PC-3 (cell line): ENCODE measurements at regions of chr21 and their contacts with region 1.

Region 1: GRCh38 chr21:18801468-18801867 is 397.9 kb upstream of the TMPRSS15 start:
- DNase-seq: peak; percentile 71
- ATAC-seq: peak; percentile 95
- H3K4me3 ChIP-seq: no peak overlapping the region
- H3K27ac ChIP-seq: no peak overlapping the region
- H3K4me1 ChIP-seq: no peaks in the 10 kb centered on the region
- H3K27me3 ChIP-seq: no peaks in the 10 kb centered on the region
- CTCF ChIP-seq: peak; percentile 67

Region 2: GRCh38 chr21:18499761-18500376 is 301.6 kb before region 1 on chr21:
- CTCF ChIA-PET with region 1: no interaction called
- POLR2A ChIA-PET with region 1: no interaction called
- intact Hi-C with region 1: loop called (anchors 5 kb)
- DNase-seq: peak; percentile 69
- ATAC-seq: no peak
- H3K4me3 ChIP-seq: no peak overlapping the region
- H3K27ac ChIP-seq: no peak overlapping the region
- H3K4me1 ChIP-seq: no peaks in the 10 kb centered on the region
- H3K27me3 ChIP-seq: no peaks in the 10 kb centered on the region
- CTCF ChIP-seq: peak; percentile 89

Region 3: GRCh38 chr21:18832950-18833349 is 31.5 kb after region 1 on chr21:
- CTCF ChIA-PET with region 1: no interaction called
- POLR2A ChIA-PET with region 1: no interaction called
- intact Hi-C with region 1: loop called (anchors 2 kb)
- DNase-seq: peak; percentile 85
- ATAC-seq: peak; percentile 98
- H3K4me3 ChIP-seq: no peak overlapping the region
- H3K27ac ChIP-seq: peak overlapping the region; percentile 50
- H3K4me1 ChIP-seq: peaks cover 18% of the 10 kb centered on the region
- H3K27me3 ChIP-seq: no peaks in the 10 kb centered on the region
- CTCF ChIP-seq: no peak

Region 4: DNA sequence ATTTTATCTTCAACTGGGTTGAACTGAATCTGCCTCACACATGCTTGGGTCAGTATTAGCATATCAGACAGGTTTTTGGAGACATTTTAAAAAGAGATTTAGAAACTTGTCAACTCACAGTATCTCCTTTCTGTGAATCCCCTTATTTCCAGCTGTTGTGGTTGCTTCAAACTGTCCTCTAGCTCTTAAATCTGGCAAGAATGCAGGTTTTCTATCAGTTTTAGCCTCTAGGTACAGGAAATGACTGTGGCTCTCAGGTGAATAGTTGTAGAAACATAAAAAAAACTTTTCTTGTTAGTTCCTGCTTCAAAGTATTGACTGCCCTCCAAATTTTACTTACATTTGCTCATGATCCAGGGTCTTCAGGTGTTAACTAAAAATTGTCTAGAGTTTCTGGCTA is 97.8 kb after region 1 on chr21:
- CTCF ChIA-PET with region 1: no interaction called
- POLR2A ChIA-PET with region 1: no interaction called
- intact Hi-C with region 1: loop called (anchors 10 kb)
- DNase-seq: no peak
- ATAC-seq: no peak
- H3K4me3 ChIP-seq: no peak overlapping the region
- H3K27ac ChIP-seq: no peak overlapping the region
- H3K4me1 ChIP-seq: peaks cover 4% of the 10 kb centered on the region; the same call in 1 of the 2 replicates
- H3K27me3 ChIP-seq: no peaks in the 10 kb centered on the region
- CTCF ChIP-seq: no peak

Region 5: DNA sequence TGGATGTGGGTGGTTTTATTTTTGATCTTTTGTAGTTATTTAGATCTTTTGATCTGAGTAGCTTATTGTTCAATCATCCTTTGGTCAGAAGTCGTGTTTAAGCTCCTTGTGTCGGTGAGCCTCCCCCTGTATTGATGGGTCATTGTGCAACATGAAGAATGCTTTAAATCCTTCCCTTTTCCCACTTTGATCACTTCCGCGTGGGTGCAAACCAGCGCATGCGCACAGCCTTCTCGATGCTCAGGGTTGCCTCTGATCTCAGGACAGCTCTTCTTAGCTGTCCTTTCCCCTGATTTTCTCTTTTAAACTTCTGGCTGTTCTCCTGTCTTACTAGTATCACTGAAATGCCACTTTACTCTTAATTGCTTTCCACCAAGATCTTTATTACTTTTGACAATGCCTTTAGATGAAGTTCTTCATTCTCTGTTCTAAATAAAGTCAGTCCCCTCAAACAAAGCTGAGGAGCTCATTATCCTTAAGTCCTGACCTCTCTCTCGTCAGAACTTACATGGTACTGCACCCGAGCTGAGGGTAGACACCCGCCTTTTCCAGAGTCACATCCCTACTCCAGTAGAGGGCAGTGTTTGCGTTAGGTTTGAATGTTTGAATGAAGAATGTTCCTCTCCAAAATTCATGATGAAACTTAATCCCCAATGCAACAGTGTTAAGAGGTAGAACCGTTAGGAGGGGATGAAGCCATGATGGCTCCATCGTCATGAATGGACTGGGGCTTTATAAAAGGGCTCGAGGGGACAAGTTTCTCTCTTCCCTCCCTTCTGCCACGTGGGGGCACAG is 150.0 kb after region 1 on chr21:
- CTCF ChIA-PET with region 1: no interaction called
- POLR2A ChIA-PET with region 1: no interaction called
- intact Hi-C with region 1: loop called (anchors 1 kb)
- DNase-seq: peak; percentile 78
- ATAC-seq: peak; percentile 72
- H3K4me3 ChIP-seq: no peak overlapping the region
- H3K27ac ChIP-seq: no peak overlapping the region
- H3K4me1 ChIP-seq: no peaks in the 10 kb centered on the region
- H3K27me3 ChIP-seq: no peaks in the 10 kb centered on the region
- CTCF ChIP-seq: peak; percentile 85